Adrenal gland (tissue), 19 donors: ENCODE measurements at regions of chr1 and their contacts with region 1.

Region 1: GRCh38 chr1:212477014-212477679 is 44.4 kb downstream of the NENF start:
- DNase-seq: peak; percentile 84 to 95 (median 87)
- H3K4me3 ChIP-seq: no peak overlapping the region
- H3K27ac ChIP-seq: no peak overlapping the region
- H3K4me1 ChIP-seq: peaks cover 0 to 3% of the 10 kb centered on the region in 2 donors
- H3K27me3 ChIP-seq: peaks cover 6% of the 10 kb centered on the region
- CTCF ChIP-seq: peak; percentile 72 to 90 (median 86)
- POLR2A ChIP-seq: no peak

Region 2: DNA sequence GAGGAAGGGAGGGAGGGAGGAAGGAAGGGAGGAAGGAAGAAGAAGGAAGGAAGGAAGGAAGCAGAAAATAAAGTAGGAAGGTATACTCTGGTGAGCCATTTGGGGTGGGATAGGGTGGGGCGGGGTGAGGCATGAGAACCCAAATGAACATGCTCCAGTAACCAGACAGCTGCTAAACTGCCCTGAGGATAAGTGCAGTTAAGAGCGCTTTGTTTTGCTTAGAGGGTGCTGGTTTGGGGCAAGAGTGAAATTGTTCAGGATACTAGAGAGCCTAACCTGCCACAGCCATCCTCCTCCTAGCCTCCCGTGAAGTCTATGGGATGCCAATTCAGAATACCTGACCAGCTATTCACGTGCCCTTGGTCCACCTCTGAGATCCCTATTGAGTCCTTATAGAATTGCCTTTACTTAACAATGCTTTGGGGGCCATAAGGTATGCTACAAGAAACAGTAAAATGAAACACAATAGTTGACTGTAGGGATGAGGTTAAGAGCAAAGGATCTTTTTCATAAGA is 72.4 kb after region 1 on chr1:
- intact Hi-C with region 1: loop called in 1 of 2 experiments (anchors 5 kb)
- DNase-seq: no peak
- H3K4me3 ChIP-seq: no peak overlapping the region
- H3K27ac ChIP-seq: no peak overlapping the region
- H3K4me1 ChIP-seq: peaks cover 0 to 7% of the 10 kb centered on the region in 2 donors
- H3K27me3 ChIP-seq: no peaks in the 10 kb centered on the region
- CTCF ChIP-seq: no peak
- POLR2A ChIP-seq: no peak

Region 3: DNA sequence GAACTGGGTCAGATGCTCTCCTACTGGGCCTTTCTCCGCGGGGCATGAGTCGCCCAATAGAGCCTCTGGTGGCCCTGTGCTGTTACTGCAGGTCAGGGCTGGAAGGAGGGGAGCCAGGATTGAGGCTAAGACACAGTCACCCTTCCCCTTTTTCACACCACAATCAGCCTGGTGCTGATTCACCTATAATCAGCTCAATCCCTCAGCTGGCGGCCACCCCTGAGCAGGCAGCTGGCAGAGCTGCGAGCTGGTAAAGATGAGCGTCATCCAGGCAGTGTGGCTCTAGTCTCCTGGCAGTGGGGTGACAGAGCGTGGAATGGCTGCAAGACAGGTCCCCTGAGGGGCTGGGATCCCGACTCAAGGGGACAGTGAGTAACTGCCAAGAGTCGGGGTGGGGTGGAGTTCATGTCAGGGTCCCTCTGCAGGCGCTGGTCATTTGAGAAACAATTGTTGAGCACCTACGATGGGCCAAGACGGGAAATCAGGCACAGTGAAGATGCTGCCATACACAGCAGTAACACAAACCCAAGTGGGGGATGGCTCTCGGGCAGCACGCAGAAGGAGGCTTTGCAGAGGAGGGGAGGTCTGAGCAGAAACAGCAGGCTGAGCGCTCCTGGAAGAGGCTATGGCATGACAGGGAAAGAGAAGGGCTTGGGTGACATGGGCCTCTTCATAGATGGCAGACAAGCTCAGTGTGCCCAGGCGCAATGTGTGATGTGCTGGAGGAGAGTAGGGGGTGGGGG is 153.2 kb after region 1 on chr1:
- intact Hi-C with region 1: loop called (anchors 5 kb)
- DNase-seq: peak; percentile 56 to 85 (median 78)
- H3K4me3 ChIP-seq: no peak overlapping the region
- H3K27ac ChIP-seq: no peak overlapping the region
- H3K4me1 ChIP-seq: no peaks in the 10 kb centered on the region
- H3K27me3 ChIP-seq: no peaks in the 10 kb centered on the region
- CTCF ChIP-seq: peak; percentile 84 to 92 (median 86)
- POLR2A ChIP-seq: no peak

Region 4: GRCh38 chr1:212782422-212783154 is 305.4 kb after region 1 on chr1:
- intact Hi-C with region 1: loop called in 1 of 2 experiments (anchors 10 kb)
- DNase-seq: peak in 1 of 7 donors; percentile 25
- H3K4me3 ChIP-seq: no peak overlapping the region
- H3K27ac ChIP-seq: no peak overlapping the region
- H3K4me1 ChIP-seq: peaks cover 0 to 3% of the 10 kb centered on the region in 2 donors
- H3K27me3 ChIP-seq: no peaks in the 10 kb centered on the region
- CTCF ChIP-seq: peak; percentile 48 to 78 (median 68)
- POLR2A ChIP-seq: no peak